Mammary epithelial cell (primary cell): ENCODE measurements at regions of chr6 and their contacts with region 1.

Region 1: DNA sequence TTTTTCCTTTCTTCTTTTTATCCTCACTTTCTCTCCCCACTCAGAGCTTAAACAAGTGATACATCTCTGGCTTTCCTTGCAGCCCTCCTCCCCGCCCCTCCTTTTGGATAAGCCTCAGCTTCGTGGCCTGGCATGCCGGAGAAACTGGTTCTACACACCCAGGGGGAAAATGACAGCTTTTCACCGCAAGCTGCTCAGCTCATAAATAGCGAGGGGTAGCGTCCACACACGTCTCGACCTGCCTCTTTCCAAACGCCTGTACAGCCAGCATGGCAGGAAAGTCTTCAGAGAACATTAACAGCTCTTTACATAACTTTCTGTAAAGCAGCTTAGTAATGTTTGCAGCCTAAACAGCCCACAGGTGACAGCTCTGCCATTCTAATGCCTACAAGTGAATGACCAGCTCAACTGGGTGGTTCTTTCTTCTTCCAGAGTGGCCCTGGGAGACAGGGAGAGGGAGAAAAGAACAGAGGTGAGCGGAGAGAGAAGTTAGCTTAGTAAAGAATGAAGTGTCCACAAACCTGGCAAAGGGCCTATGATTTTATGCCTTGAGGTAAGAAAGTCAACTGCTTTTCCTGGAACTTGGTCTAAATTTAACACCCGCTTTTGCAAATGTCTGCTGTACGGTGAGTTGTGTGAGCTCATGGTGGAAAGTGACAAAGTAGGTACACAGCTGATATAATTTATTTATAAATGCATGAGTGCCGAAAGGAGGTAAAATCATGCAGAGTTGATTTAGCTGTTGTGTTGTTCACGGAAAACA is 251.5 kb downstream of the TFAP2A start:
- DNase-seq: peak; percentile 98
- H3K4me3 ChIP-seq: peak overlapping the region; percentile 43 to 59 (median 47)
- H3K27ac ChIP-seq: peak overlapping the region; percentile 93
- H3K4me1 ChIP-seq: peaks cover 21% of the 10 kb centered on the region
- H3K27me3 ChIP-seq: no peaks in the 10 kb centered on the region
- CTCF ChIP-seq: no peak

Region 2: GRCh38 chr6:9851541-9852380 is 311.6 kb before region 1 on chr6:
- CTCF ChIA-PET with region 1: no interaction called
- dilution Hi-C with region 1: no loop called
- in situ Hi-C with region 1: no loop called
- intact Hi-C with region 1: loop called (anchors 5 kb)
- DNase-seq: peak; percentile 76
- H3K4me3 ChIP-seq: no peak overlapping the region
- H3K27ac ChIP-seq: peak overlapping the region; percentile 20
- H3K4me1 ChIP-seq: peaks cover 9% of the 10 kb centered on the region
- H3K27me3 ChIP-seq: no peaks in the 10 kb centered on the region
- CTCF ChIP-seq: peak; percentile 66 to 69

Region 3: GRCh38 chr6:10030942-10031537 is 132.3 kb before region 1 on chr6:
- CTCF ChIA-PET with region 1: no interaction called
- dilution Hi-C with region 1: no loop called
- in situ Hi-C with region 1: no loop called
- intact Hi-C with region 1: loop called (anchors 5 kb)
- DNase-seq: peak; percentile 16
- H3K4me3 ChIP-seq: no peak overlapping the region
- H3K27ac ChIP-seq: no peak overlapping the region
- H3K4me1 ChIP-seq: no peaks in the 10 kb centered on the region
- H3K27me3 ChIP-seq: no peaks in the 10 kb centered on the region
- CTCF ChIP-seq: peak; percentile 53 to 60

Region 4: GRCh38 chr6:10138917-10139316 is 24.5 kb before region 1 on chr6:
- CTCF ChIA-PET with region 1: no interaction called
- dilution Hi-C with region 1: no loop called
- in situ Hi-C with region 1: no loop called
- intact Hi-C with region 1: loop called (anchors 1 kb)
- DNase-seq: peak; percentile 72
- H3K4me3 ChIP-seq: no peak overlapping the region
- H3K27ac ChIP-seq: no peak overlapping the region
- H3K4me1 ChIP-seq: peaks cover 16% of the 10 kb centered on the region
- H3K27me3 ChIP-seq: no peaks in the 10 kb centered on the region
- CTCF ChIP-seq: no peak

Region 5: GRCh38 chr6:10201606-10202539 is 38.5 kb after region 1 on chr6:
- CTCF ChIA-PET with region 1: no interaction called
- dilution Hi-C with region 1: no loop called
- in situ Hi-C with region 1: no loop called
- intact Hi-C with region 1: loop called (anchors 1 kb)
- DNase-seq: peak; percentile 73
- H3K4me3 ChIP-seq: no peak overlapping the region
- H3K27ac ChIP-seq: peak overlapping the region; percentile 69
- H3K4me1 ChIP-seq: peaks cover 17% of the 10 kb centered on the region
- H3K27me3 ChIP-seq: no peaks in the 10 kb centered on the region
- CTCF ChIP-seq: no peak

Region 6: DNA sequence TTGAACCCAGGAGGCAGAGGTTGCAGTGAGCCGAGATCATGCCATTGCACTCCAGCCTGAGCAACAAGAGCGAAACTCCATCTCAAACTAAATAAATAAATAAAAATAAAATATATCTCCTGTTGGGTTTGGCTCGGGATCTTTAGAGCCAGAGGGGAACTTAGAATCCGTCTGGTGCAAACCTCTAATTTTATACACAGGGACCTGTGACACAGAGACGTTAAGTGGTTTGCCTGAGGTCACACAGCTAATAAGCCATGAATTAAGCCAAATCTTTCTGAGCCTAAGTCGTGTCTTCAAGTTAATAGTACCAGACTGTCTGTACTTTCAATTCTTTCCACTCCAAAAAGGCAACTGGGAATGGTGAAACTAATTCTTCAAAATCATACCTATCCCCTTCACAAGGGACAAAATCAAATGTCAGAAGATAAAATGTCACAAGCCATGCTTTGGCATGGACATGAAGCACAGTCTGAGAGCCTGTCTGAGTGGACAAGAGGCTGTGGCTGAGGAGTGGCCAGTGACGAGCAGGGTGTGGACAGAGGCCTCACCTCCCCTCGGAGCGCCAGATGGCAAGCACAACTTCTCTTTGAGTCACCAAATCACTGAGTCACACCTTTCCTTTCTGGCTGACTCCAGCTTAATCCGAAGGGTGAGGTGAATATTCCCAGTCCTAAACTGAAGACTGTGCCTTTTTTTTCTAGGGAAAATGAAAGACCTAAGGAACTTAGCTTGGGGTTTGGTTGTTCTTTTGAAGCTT is 74.1 kb after region 1 on chr6:
- CTCF ChIA-PET with region 1: no interaction called
- dilution Hi-C with region 1: no loop called
- in situ Hi-C with region 1: no loop called
- intact Hi-C with region 1: loop called (anchors 10 kb)
- DNase-seq: peak; percentile 96
- H3K4me3 ChIP-seq: no peak overlapping the region
- H3K27ac ChIP-seq: peak overlapping the region; percentile 77
- H3K4me1 ChIP-seq: peaks cover 8% of the 10 kb centered on the region
- H3K27me3 ChIP-seq: no peaks in the 10 kb centered on the region
- CTCF ChIP-seq: no peak